Posterior vena cava (tissue), 2 donors: ENCODE measurements at regions of chr17 and their contacts with region 1.

Region 1: DNA sequence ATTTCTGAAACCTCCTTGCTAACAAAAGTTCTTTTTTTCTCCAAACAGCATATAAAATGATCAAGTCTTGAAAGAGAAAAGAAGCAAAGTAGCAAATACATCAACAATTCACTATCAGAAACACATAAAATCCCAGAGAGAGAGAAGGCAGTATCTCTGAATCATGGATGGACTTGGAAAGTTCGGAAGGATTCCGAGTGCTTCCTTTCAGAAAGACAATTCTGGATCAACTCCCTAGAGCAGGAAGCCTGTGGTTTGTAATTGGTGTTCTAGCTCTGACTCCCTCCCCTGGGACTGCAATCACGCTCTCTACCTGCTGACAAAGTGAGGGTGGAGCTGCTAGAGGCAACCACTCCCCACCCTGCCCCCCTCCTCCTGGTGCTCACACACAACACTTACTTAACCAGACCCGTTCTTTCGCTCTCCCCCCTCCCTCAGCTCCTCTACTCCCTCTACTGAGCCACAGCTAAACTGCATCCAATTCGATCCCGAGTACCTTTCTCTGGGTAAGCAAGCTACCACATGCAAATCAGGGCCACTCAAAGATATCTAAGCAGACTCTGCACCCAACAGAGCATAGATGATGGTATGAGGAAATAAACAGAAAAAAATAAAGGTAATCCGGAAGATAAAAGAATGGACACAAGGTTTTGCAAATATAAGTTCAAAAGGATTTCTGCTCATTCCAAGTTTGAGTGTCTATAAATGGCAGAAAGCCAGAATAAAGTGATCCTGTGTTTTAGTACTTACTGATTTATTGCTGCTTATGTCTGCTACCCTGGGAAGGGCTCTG is at the start of gene RNF43:
- DNase-seq: peak; percentile 87
- total RNA-seq, gene RNF43: not detected

Region 2: DNA sequence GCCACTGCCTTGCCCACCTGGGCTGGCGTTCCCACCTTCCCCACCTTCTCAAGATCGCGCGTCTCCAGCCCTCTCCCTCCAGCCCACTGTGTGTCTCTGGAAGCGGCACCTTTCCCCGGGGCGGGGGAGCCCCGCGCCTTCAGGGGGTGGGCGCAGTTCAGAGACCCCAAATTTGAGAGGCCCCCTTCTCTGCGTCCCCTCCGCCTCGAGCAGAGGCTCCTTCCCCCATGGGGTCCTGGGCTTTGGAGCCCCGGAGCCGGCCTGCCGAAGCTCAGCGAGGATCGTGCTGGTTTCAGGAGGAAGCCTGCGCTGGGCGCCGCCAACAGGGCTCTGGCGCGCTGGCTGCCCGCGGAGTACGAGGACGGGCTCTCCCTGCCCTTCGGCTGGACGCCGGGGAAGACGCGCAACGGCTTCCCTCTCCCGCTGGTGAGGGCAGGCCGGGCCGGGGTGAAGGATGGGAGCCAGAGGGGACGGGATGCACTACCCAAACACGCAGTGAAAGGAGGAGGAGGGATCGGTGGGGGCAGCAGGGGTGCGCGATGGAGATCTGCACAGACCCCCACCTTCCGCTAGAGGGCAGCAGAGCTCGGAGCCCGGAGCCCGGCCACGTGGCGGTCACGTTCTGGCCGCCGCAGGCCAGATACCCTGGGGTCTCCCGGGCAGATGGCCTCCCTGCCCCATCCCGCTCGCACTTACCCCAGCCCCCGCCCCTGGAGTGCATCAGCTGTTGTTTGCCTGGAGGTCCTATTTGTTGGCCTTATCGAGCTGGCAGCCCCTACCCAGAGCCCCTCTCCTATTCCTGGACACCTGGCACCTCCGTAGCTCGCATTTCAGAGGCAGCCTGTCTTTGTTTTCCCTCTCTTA is 168.0 kb before region 1 on chr17:
- intact Hi-C with region 1: loop called in 1 of 2 experiments (anchors 10 kb)
- DNase-seq: peak; percentile 92

Region 3: DNA sequence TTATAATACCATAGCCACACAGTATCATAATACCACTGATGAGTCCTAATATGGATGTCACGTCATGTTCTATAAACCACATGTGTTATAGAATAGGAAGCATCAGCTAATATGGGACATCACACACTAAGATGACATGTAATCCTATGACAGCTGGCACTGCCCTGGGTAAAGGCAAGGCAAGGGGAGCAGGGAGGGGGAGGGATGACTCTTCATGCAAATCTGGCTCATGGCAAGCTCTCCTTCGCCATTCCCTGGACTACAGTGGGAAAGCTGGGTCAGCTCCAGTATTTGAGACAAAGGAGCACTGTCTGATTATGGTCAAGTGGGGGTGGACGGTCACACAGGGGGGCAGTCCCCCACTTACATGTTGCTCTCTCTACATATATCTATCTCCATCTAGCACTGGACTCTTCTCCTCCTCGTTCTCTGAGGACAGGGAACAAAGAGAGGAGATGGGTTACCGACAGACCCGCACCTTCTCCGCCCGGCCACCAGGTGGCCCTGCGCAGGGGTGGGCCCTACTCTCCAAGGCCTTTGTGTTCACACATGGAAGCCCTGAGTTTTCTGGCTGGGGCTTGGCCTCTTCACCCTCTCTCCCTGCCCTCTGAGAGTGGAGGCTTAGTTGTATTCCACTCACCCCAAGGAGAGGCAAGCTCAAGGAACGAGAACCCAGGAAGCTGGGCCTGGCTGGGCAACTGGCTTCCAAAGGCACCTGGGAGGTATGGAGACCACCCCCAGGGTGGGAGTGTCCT is 113.3 kb before region 1 on chr17:
- intact Hi-C with region 1: loop called in 1 of 2 experiments (anchors 10 kb)
- DNase-seq: peak; percentile 80

Region 4: DNA sequence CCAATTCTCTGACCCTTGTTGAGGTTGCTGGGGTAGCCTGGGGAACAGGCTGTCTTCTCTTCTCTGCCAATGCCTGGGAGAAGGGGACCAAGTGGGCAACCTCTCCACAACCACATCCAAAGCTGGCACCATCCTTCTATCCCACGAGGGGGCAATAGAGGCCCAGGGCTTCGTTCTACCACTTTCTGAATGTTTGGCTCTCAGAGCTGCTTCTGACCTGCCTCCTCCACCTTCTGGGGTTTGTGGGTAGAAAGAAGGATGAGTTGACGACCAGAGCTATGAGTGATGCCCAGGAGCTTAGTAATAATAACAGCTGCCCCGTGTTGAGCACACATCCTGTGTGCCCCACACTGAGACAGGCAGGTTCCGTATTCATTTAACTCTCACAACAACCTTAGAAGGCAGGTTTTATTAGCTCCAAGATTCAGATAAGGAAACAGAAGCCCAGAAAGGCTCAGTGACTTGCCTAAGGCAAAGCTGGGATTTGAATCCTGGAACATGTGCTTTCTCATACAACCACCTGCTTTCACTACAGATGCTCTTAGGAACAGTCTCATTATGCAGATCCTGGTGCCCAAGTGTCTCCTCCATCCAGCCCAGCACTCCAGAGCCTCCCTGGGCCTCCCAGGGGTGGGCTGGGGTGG is 100.0 kb before region 1 on chr17:
- intact Hi-C with region 1: loop called in 1 of 2 experiments (anchors 10 kb)
- DNase-seq: peak; percentile 71